IMR-90 (cell line): ENCODE measurements at regions of chr2 and their contacts with region 1.

Region 1: DNA sequence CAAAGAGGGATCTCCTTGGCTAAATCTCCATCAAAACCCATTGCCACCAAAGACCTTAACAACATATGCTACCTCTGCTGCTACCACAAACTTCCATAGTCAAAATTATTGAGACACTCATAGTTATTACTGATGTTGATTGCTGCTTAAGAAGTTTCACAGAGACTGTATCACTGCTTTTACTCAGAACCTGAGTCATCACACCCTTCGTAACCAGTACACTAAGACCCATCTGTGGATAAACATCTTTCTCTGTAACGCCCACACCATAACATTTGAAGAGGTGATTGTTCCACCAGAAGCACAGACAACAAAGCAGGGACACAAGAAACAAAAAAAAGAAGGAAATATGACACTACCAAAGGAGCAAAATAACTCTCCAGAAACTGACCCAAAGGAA is 1563.1 kb downstream of the LRP1B start:
- DNase-seq: peak; percentile 20
- ATAC-seq: no peak
- H3K4me3 ChIP-seq: no peak overlapping the region
- H3K27ac ChIP-seq: no peak overlapping the region
- H3K4me1 ChIP-seq: no peaks in the 10 kb centered on the region
- H3K27me3 ChIP-seq: no peaks in the 10 kb centered on the region
- CTCF ChIP-seq: no peak
- POLR2A ChIP-seq: no peak
- RAD21 ChIP-seq: no peak

Region 2: DNA sequence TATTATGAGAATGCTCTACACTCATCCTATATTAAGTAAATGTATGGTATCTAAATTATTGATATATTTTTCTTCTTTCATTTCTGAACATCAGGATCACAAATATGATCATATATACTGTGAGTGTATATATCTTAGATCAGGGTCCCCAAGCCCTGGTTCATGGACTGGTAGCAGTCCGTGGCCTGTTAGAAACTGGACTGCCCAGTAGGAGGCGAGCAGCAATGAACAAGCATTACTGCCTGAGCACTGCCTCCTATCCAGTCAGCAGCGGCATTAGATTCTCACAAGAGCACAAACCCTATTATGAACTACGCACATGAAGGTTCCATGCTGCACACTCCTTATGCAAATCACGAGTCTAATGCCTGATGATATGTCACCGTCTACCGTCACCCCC is 540.4 kb before region 1 on chr2:
- CTCF ChIA-PET with region 1: no interaction called
- POLR2A ChIA-PET with region 1: no interaction called
- dilution Hi-C with region 1: no loop called
- in situ Hi-C with region 1: no loop called
- intact Hi-C with region 1: no loop called
- DNase-seq: no peak
- ATAC-seq: no peak
- H3K4me3 ChIP-seq: no peak overlapping the region
- H3K27ac ChIP-seq: no peak overlapping the region
- H3K4me1 ChIP-seq: no peaks in the 10 kb centered on the region
- H3K27me3 ChIP-seq: no peaks in the 10 kb centered on the region
- CTCF ChIP-seq: no peak
- POLR2A ChIP-seq: no peak
- RAD21 ChIP-seq: no peak

Region 3: DNA sequence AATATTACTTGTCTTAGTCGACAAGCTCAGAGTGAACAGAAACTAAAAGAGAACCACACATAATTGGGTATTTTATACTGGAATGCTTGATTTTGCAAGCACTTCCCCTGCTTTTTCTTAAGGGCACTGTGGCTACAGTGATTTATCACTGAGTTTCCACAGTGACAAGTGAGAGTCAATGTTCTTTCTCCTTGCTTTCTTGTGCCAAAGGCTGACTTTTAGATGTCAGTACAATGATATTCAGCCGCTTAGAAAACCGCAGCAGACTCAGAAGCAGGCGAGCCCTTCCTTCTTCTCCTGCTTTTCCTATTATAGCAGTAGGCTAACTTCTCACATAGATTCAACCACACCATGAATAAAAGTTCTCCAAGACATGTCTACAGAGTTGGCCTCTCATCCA is 184.0 kb before region 1 on chr2:
- CTCF ChIA-PET with region 1: no interaction called
- POLR2A ChIA-PET with region 1: no interaction called
- dilution Hi-C with region 1: no loop called
- in situ Hi-C with region 1: no loop called
- intact Hi-C with region 1: no loop called
- DNase-seq: no peak
- ATAC-seq: no peak
- H3K4me3 ChIP-seq: no peak overlapping the region
- H3K27ac ChIP-seq: no peak overlapping the region
- H3K4me1 ChIP-seq: no peaks in the 10 kb centered on the region
- H3K27me3 ChIP-seq: no peaks in the 10 kb centered on the region
- CTCF ChIP-seq: no peak
- POLR2A ChIP-seq: no peak
- RAD21 ChIP-seq: no peak

Region 4: GRCh38 chr2:140786585-140786984 is 218.9 kb after region 1 on chr2:
- CTCF ChIA-PET with region 1: no interaction called
- POLR2A ChIA-PET with region 1: no interaction called
- dilution Hi-C with region 1: no loop called
- in situ Hi-C with region 1: no loop called
- intact Hi-C with region 1: loop called (anchors 10 kb)
- DNase-seq: no peak
- ATAC-seq: no peak
- H3K4me3 ChIP-seq: no peak overlapping the region
- H3K27ac ChIP-seq: no peak overlapping the region
- H3K4me1 ChIP-seq: no peaks in the 10 kb centered on the region
- H3K27me3 ChIP-seq: no peaks in the 10 kb centered on the region
- CTCF ChIP-seq: no peak
- POLR2A ChIP-seq: no peak
- RAD21 ChIP-seq: no peak